ENCODE measurements at regions of chr16 and their contacts with region 1.

Region 1: GRCh38 chr16:81095953-81096717 is at the start of gene GCSH:
- DNase-seq: peak; percentile 99
- ATAC-seq: peak; percentile 99
- H3K4me3 Mint-ChIP-seq: peak within 1 kb of the TSS; percentile 72
- H3K27ac Mint-ChIP-seq: peak within 1 kb of the TSS; percentile 78
- H3K4me1 Mint-ChIP-seq: peaks cover 16% of the 10 kb centered on the region
- H3K27me3 Mint-ChIP-seq: no peaks in the 10 kb centered on the region
- total RNA-seq, gene GCSH: 22.2 to 24.9 TPM

Region 2: DNA sequence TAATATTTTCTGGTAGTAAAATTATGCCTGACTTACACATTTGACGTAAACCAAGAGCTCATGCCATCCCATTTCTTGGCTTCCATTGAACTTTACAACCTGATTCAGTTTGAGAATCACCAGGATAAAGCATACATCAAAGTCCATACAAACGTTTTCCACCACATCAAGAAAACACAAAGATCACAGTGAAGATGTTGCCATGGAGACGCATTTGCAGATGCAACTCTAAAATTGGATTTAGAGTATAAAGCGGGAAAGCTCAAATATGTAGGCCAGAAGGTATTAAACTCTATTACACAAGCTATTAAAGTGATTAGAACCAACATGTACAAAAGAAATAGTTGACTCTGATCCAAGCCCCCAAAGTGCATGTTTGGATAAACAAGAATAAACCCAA is 29.5 kb before region 1 on chr16:
- CTCF ChIA-PET with region 1: no interaction called
- POLR2A ChIA-PET with region 1: no interaction called
- intact Hi-C with region 1: no loop called
- DNase-seq: no peak
- ATAC-seq: no peak
- H3K4me3 Mint-ChIP-seq: no peak overlapping the region
- H3K27ac Mint-ChIP-seq: no peak overlapping the region
- H3K4me1 Mint-ChIP-seq: peaks cover 4% of the 10 kb centered on the region
- H3K27me3 Mint-ChIP-seq: no peaks in the 10 kb centered on the region

Region 3: DNA sequence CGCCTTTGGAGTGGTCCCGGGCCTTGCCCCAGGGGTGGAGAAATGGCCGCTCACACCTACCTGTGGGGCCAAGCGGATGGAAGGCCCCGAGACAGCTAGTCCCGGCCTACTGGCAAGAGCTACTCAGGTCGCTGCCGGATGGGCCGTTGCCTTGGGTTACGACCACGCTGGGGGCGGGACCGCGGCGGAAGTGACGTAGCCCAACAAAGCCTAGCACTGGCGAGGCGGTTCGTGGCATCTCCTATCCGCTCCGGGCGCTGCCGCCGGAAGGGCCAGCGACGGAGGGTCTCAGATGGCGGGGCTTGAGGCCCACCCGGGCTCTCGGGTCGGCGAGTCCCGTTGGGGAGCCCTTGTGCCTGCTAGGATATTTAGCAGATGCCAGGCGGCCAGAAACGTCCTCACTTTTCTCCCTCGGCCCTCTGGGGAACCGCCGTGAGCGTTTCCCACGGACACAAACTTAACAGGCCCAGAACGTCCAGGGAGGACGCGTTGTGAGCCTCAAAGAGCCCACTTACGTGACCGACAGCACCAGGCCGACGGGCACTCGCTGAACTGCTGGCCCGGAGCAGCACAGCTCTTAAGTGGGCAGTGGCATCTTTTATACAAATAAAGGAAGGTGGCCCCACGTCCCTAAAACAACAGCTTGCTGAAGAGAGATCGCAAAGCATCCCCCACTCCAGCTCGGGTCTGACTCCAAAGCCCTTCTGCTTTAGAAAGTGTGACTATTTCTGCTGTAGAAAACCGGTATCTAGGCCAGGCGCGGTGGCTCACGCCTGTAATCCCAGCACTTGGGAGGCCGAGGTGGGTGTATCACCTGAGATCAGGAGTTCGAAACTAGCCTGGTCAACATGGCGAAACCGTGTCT is 18.8 kb before region 1 on chr16 and contains the start of gene C16orf46:
- CTCF ChIA-PET with region 1: interaction called, 4 read pairs
- POLR2A ChIA-PET with region 1: interaction called, 15 read pairs
- intact Hi-C with region 1: loop called (anchors 1 kb)
- DNase-seq: peak; percentile 99
- ATAC-seq: peak; percentile 86
- H3K4me3 Mint-ChIP-seq: no peak within 1 kb of the TSS
- H3K27ac Mint-ChIP-seq: peak within 1 kb of the TSS; percentile 84
- H3K4me1 Mint-ChIP-seq: peaks cover 7% of the 10 kb centered on the region
- H3K27me3 Mint-ChIP-seq: no peaks in the 10 kb centered on the region
- total RNA-seq, gene C16orf46: 0.28 to 0.34 TPM

Region 4: GRCh38 chr16:81745704-81746558 is 649.8 kb after region 1 on chr16:
- CTCF ChIA-PET with region 1: no interaction called
- POLR2A ChIA-PET with region 1: no interaction called
- intact Hi-C with region 1: loop called in 1 of 2 experiments (anchors 1 kb)
- DNase-seq: peak; percentile 85
- ATAC-seq: peak; percentile 91
- H3K4me3 Mint-ChIP-seq: peak overlapping the region; percentile 73
- H3K27ac Mint-ChIP-seq: peak overlapping the region; percentile 87
- H3K4me1 Mint-ChIP-seq: peaks cover 16% of the 10 kb centered on the region
- H3K27me3 Mint-ChIP-seq: no peaks in the 10 kb centered on the region

Measured in activated CD4-positive, alpha-beta T cell treated with anti-CD3 and anti-CD28 coated beads for 36 hours (primary cell).